Head of caudate nucleus (tissue), 42 donors: ENCODE measurements at regions of chr5 and their contacts with region 1.

Region 1: DNA sequence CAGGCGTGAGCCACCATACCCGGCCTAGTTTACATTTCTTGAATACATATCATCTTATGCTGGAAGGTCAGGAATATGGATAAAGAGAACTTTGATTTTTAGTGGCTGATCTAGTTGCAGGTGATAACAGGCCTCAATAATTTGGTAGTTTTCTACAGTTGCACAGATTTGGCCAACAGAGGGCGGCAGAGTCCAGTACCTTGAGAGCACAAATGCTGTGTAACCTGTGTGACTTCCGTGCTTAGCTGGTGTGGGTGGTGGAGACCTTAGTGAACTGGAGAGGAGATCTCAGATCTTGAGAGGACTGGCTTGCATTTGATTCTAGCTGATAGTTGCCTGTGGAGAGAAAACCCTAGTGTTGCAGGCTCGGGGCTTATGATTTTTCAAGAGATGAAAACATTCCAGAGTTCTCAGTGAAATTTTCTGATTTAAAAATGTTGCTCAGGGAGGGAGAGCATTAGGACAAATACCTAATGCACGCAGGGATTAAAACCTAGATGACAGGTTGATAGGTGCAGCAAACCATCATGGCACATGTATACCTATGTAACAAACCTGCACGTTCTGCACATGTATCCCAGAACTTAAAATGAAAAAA is 17.4 kb upstream of the GPR151 start:
- DNase-seq: peak; percentile 64 to 91 (median 81)

Region 2: GRCh38 chr5:146111409-146111808 is 421.9 kb before region 1 on chr5:
- intact Hi-C with region 1: no loop called
- DNase-seq: no peak

Region 3: GRCh38 chr5:146327222-146327853 is 206.0 kb before region 1 on chr5:
- intact Hi-C with region 1: no loop called
- DNase-seq: no peak

Region 4: DNA sequence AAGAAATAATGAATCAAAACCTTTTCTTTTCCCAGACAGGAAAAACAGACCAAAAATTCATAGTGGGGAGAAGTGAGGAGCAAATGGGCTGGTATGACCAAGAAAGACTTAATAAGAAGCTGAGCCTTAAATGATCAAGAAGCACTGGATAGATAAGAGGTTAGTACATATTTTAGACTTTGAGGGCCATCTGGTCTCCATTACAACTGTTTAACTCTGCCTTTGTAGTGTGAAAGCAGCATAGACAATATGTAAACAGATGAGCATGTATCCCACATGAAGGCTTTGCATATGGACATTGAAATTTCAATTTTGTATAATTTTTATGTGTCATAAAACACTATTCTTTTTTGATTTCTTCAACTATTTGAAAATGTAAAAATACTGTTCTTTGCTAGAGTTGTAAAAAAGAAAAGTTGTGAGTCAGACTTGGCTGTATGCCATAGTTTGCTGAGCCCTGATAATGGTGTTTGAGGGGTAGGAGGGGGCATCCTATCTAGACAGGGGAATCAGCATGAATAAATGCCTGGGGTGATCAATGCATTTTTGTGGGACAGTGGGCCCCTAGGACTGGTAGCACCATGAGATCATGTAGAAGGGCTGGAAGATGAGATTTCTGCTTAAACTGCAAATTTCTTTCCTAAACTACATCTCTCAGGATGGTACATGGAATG is 74.4 kb after region 1 on chr5:
- intact Hi-C with region 1: no loop called
- DNase-seq: no peak

Region 5: DNA sequence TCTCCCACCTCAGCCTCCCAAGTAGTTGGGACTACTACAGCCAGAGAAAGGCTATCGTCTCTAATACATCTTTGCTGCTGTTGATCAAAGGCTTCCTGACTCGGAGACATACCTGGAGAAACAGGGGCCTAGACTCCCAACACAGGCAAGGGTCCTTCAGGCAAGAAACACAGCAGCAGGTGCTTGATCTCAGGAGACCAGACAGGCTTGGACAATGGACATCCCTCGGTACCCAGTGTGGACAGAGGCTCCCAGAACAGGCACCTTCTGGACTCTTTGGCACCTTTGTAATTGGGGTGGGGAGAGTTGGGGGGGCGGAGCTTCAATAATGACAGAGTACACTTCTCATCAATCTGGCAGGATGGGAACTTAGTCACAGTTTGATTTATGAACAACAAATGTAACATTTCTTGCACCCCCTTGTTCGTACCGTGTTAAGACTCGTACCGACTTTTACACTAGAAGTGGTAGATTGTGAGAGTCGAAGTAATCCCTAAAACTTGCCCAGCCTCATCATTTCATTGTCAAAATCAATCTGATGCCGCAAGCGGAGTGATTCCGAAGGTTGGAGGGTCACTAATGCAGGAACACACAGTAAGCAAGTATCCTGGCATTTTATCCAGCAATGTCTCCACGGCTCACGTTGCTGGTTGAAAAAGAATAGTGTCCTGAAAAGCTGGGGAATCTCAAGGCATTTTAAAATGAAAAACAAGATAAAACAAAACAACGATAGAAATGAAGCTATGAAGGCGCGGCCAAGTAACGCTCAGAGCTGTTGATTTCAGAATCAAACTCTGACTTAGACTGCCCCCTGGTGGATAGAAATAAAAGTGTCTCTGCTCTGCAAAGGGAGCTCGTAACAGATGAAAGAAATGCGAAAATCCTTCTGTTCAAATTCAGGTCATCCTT is 655.1 kb after region 1 on chr5:
- intact Hi-C with region 1: loop called (anchors 10 kb)
- DNase-seq: peak in 38 of 42 donors; percentile 20 to 94 (median 68)

Region 6: DNA sequence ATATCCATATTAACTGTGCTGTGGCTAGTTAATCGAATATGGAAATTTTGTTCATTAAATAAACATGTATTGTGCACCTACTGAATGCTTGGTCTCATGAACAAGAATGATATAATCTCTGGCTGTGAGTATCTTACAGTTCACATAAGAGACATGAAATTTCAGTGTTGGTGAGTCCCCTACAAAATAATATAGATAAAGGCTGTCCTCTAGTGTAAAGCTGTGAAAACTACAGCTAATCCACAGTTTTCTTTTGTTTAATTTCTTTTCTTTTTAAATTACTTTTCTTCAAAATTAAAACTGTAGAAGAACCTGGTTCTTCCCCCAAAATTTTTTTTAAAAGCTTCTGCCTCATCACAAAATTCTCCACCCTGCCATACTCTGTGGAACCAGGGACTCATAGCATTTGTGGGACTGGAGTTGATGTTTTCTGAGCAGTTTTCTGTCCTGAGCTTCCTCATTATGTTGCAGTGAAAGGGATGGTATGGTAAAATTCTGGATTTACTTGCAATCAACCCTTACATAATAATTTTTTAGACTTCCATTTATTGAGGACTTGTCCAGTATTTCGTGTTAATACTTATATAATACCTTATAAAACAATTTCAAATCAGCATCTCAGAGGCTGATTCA is 836.5 kb after region 1 on chr5:
- intact Hi-C with region 1: loop called (anchors 10 kb)
- DNase-seq: no peak